Lower leg skin (tissue), 4 donors: ENCODE measurements at regions of chr14 and their contacts with region 1.

Region 1: GRCh38 chr14:104085030-104085888 is at the start of gene ASPG:
- DNase-seq: no peak
- H3K4me3 ChIP-seq: no peak within 1 kb of the TSS
- CTCF ChIP-seq: no peak
- POLR2A ChIP-seq: no peak
- total RNA-seq, gene ASPG: 12.1 to 56.6 (median 25.4) TPM

Region 2: GRCh38 chr14:104563742-104564615 is 478.7 kb after region 1 on chr14:
- intact Hi-C with region 1: loop called (anchors 5 kb)
- DNase-seq: peak; percentile 43 to 92
- H3K4me3 ChIP-seq: no peak overlapping the region
- CTCF ChIP-seq: peak in 1 of 3 donors; percentile 39
- POLR2A ChIP-seq: no peak

Region 3: GRCh38 chr14:104639889-104640548 is 554.8 kb after region 1 on chr14:
- intact Hi-C with region 1: loop called (anchors 10 kb)
- DNase-seq: peak in 1 of 2 donors; percentile 40
- H3K4me3 ChIP-seq: no peak overlapping the region
- CTCF ChIP-seq: no peak
- POLR2A ChIP-seq: no peak